MCF 10A (cell line): ENCODE measurements at regions of chr11 and their contacts with region 1.

Region 1: DNA sequence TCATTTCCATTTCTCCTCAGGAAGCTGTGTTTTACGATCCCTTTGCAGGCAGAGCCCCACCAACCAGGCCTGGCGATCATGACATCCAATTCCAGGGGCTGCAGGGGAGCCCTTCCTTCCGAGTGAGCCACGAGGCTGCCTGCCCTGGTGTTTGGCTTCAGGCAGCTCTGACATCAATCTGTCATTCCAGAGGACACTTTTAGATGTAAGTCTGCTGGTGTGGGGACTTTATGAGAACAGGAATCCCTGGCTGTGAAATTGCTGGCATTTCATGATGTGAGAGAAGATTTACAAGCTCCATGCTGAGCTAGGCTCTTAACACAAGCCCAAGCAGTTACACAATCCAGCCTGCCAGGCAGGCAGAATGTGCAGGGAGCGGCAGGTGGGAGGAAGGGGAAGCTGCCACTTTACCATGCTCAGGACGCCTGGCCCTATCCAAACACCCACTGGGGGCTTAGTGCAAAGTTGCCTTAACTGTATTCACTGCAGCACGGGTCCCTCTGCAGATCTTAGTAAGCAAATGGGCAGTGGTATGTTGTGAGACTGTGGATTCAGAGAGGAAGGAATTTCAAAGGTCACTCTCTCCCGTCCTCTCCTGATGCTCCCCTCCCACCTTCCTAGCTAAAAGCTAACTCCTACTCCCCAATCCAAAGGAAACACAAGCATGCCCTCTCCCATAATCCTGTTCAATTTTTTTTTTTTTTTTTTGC is 43.4 kb upstream of the MICAL2 start:
- DNase-seq: peak; percentile 82
- H3K4me3 Mint-ChIP-seq: peak overlapping the region; percentile 49
- H3K27ac Mint-ChIP-seq: peak overlapping the region; percentile 95
- H3K4me1 Mint-ChIP-seq: peaks cover 53% of the 10 kb centered on the region
- H3K27me3 Mint-ChIP-seq: no peaks in the 10 kb centered on the region
- CTCF ChIP-seq: no peak

Region 2: GRCh38 chr11:12079726-12080556 is 13.0 kb after region 1 on chr11:
- CTCF ChIA-PET with region 1: interaction called, 4 read pairs
- POLR2A ChIA-PET with region 1: interaction called, 82 read pairs
- intact Hi-C with region 1: loop called (anchors 2 kb)
- DNase-seq: peak; percentile 92
- H3K4me3 Mint-ChIP-seq: peak overlapping the region; percentile 46
- H3K27ac Mint-ChIP-seq: peak overlapping the region; percentile 91
- H3K4me1 Mint-ChIP-seq: peaks cover 43% of the 10 kb centered on the region
- H3K27me3 Mint-ChIP-seq: no peaks in the 10 kb centered on the region
- CTCF ChIP-seq: no peak

Region 3: GRCh38 chr11:12110201-12110713 is 43.3 kb after region 1 on chr11 and contains the start of gene MICAL2:
- CTCF ChIA-PET with region 1: no interaction called
- POLR2A ChIA-PET with region 1: interaction called, 13 read pairs
- intact Hi-C with region 1: no loop called
- DNase-seq: peak; percentile 88
- H3K4me3 Mint-ChIP-seq: peak within 1 kb of the TSS; percentile 79
- H3K27ac Mint-ChIP-seq: peak within 1 kb of the TSS; percentile 61
- H3K4me1 Mint-ChIP-seq: peaks cover 29% of the 10 kb centered on the region
- H3K27me3 Mint-ChIP-seq: no peaks in the 10 kb centered on the region
- CTCF ChIP-seq: no peak
- total RNA-seq, gene MICAL2: 151 and 154 TPM in 2 replicates